ENCODE measurements at regions of chr2 and their contacts with region 1.

Region 1: GRCh38 chr2:29014811-29015421 is 33.8 kb downstream of the TOGARAM2 start:
- DNase-seq: peak; percentile 32 to 85 (median 71)
- ATAC-seq: peak; percentile 60 to 69
- H3K4me3 Mint-ChIP-seq: peak overlapping the region; percentile 68 to 93 (median 83)
- H3K27ac Mint-ChIP-seq: peak overlapping the region; percentile 96 to 100 (median 99)
- H3K4me1 Mint-ChIP-seq: peaks cover 49 to 81% (median 73%) of the 10 kb centered on the region in 4 donors
- H3K27me3 Mint-ChIP-seq: no peaks in the 10 kb centered on the region

Region 2: GRCh38 chr2:28870146-28870891 is 144.6 kb before region 1 on chr2 and contains the start of gene TRMT61B:
- POLR2A ChIA-PET with region 1: interaction called, 11 read pairs
- DNase-seq: peak; percentile 93 to 98 (median 96)
- ATAC-seq: peak; percentile 93
- H3K4me3 Mint-ChIP-seq: peak within 1 kb of the TSS; percentile 93 to 100 (median 96)
- H3K27ac Mint-ChIP-seq: peak within 1 kb of the TSS; percentile 97 to 100 (median 100)
- H3K4me1 Mint-ChIP-seq: peaks cover 12 to 44% (median 36%) of the 10 kb centered on the region in 4 donors
- H3K27me3 Mint-ChIP-seq: peaks cover 0 to 2% (median 0%) of the 10 kb centered on the region in 5 donors
- polyA plus RNA-seq, gene TRMT61B: 17.0 to 21.5 (median 19.5) TPM

Region 3: GRCh38 chr2:29000481-29000880 is 14.4 kb before region 1 on chr2:
- POLR2A ChIA-PET with region 1: interaction called, 17 read pairs
- DNase-seq: peak in 9 of 10 donors; percentile 44 to 76 (median 61)
- ATAC-seq: peak; percentile 94 to 99
- H3K4me3 Mint-ChIP-seq: peak overlapping the region in 9 of 10 donors; percentile 2 to 75 (median 49)
- H3K27ac Mint-ChIP-seq: peak overlapping the region; percentile 21 to 95 (median 84)
- H3K4me1 Mint-ChIP-seq: peaks cover 24 to 42% (median 37%) of the 10 kb centered on the region in 4 donors
- H3K27me3 Mint-ChIP-seq: no peaks in the 10 kb centered on the region

Region 4: DNA sequence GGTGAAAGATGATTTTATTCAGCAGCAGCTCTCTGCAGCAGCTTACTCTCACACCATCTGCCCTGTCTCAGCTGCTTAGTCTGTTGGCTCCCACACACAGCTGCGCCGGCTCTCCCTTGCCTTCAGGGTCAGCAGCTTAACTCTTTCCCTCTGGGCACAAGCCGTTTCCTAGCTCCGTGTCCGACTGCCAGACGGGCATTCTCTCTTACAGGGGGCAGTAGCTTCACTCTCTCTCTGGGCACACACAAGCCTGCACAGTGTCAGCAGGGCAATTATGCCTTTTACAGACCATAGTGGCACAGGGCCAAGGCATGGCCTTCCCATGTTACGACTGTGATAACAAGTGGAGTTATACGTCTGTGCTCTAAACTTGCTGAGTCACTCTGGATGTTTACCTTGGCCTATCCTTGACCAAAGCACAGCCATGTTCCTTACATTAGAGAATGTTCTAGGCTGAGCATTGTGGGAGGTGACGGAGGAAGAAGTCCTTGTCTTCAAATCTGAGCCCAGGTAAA is 27.7 kb after region 1 on chr2:
- POLR2A ChIA-PET with region 1: no interaction called
- DNase-seq: no peak
- ATAC-seq: no peak
- H3K4me3 Mint-ChIP-seq: no peak overlapping the region
- H3K27ac Mint-ChIP-seq: peak overlapping the region in 1 of 10 donors; percentile 77
- H3K4me1 Mint-ChIP-seq: peaks cover 0 to 3% (median under 1%) of the 10 kb centered on the region in 4 donors
- H3K27me3 Mint-ChIP-seq: no peaks in the 10 kb centered on the region

Region 5: GRCh38 chr2:29115797-29116781 is 101.2 kb after region 1 on chr2:
- POLR2A ChIA-PET with region 1: interaction called, 62 read pairs
- DNase-seq: peak; percentile 43 to 79 (median 62)
- ATAC-seq: peak; percentile 46 to 63
- H3K4me3 Mint-ChIP-seq: peak overlapping the region; percentile 84 to 98 (median 92)
- H3K27ac Mint-ChIP-seq: peak overlapping the region; percentile 93 to 99 (median 98)
- H3K4me1 Mint-ChIP-seq: peaks cover 10 to 58% (median 55%) of the 10 kb centered on the region in 4 donors
- H3K27me3 Mint-ChIP-seq: no peaks in the 10 kb centered on the region

Measured in naive thymus-derived CD8-positive, alpha-beta T cell (primary cell).